Prostate gland (tissue), 2 donors: ENCODE measurements at regions of chr6 and their contacts with region 1.

Region 1: GRCh38 chr6:31597006-31597405 is 4.2 kb upstream of the NCR3 start:
- DNase-seq: no peak
- H3K4me3 ChIP-seq: no peak overlapping the region
- H3K27ac ChIP-seq: no peak overlapping the region
- H3K4me1 ChIP-seq: no peaks in the 10 kb centered on the region
- H3K27me3 ChIP-seq: no peaks in the 10 kb centered on the region
- CTCF ChIP-seq: peak in 2 of 4 experiments; percentile 11 to 36
- POLR2A ChIP-seq: no peak

Region 2: GRCh38 chr6:31546962-31547726 is 49.9 kb before region 1 on chr6 and contains the start of gene NFKBIL1:
- intact Hi-C with region 1: loop called (anchors 1 kb)
- DNase-seq: peak; percentile 96
- H3K4me3 ChIP-seq: peak within 1 kb of the TSS; percentile 35 to 43
- H3K27ac ChIP-seq: peak within 1 kb of the TSS; percentile 81 to 90
- H3K4me1 ChIP-seq: peaks cover 6% of the 10 kb centered on the region
- H3K27me3 ChIP-seq: no peaks in the 10 kb centered on the region
- CTCF ChIP-seq: no peak
- POLR2A ChIP-seq: peak; percentile 70
- total RNA-seq, gene NFKBIL1: 38.0 to 48.7 TPM

Region 3: GRCh38 chr6:31580807-31581433 is 16.1 kb before region 1 on chr6:
- intact Hi-C with region 1: loop called (anchors 1 kb)
- DNase-seq: peak; percentile 79
- H3K4me3 ChIP-seq: peak overlapping the region; percentile 62 to 68
- H3K27ac ChIP-seq: peak overlapping the region; percentile 65 to 85
- H3K4me1 ChIP-seq: no peaks in the 10 kb centered on the region
- H3K27me3 ChIP-seq: no peaks in the 10 kb centered on the region
- CTCF ChIP-seq: peak; percentile 92 to 98 (median 96)
- POLR2A ChIP-seq: peak; percentile 40

Region 4: GRCh38 chr6:31776989-31777666 is 180.1 kb after region 1 on chr6 and contains the start of gene VWA7:
- intact Hi-C with region 1: no loop called
- DNase-seq: peak; percentile 42
- H3K4me3 ChIP-seq: no peak within 1 kb of the TSS
- H3K27ac ChIP-seq: peak within 1 kb of the TSS in 1 of 2 donors; percentile 15
- H3K4me1 ChIP-seq: no peaks in the 10 kb centered on the region
- H3K27me3 ChIP-seq: no peaks in the 10 kb centered on the region
- CTCF ChIP-seq: peak in 1 of 4 experiments; percentile 10
- POLR2A ChIP-seq: peak; percentile 26
- total RNA-seq, gene VWA7: 2.7 to 13.0 TPM

Region 5: DNA sequence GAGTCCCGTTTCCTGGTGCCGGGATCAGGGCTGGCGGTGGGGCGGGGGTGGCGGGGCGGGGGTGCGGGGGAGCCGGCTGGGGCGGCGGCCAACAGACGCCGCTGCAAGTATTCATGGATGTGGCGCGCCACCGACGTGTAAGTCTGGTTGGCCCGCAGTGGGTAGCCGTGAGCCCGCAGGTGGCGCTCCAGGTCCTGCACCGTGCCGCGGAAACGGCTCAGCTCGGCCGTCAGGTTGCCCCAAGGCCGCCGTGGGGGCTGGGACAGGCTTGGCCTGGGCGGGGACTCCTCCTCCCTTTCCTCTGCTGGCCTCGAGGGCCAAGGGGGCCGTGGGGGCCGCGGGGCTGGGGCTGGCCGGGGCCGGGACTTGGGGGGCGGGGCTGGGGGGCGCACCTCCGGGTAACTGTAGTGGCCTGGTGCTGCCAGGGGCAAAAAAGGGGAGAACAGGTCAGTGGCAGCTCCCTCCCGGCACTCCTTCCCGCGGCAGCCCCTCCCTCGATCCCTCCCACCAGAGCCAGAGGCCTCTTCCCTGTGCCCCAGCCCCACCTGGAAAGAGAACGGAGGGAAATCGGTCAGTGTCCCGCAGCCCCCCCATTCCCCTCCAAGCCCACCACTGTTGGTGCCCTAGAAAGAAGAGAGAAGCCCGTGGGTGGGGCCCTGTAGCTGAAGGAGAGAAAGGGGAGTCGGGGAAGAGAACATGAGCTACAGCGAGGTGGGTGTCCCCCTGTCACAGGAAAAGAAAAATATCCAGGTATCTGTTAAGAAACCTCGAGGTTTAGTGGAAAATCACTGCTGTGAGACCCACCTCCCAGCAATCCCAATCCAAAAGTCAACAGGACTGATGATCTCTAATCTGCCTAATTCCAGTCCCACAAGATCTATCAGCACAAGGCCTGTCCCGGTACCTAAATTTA is 490.8 kb after region 1 on chr6:
- intact Hi-C with region 1: no loop called
- DNase-seq: peak; percentile 73
- H3K4me3 ChIP-seq: peak overlapping the region in 1 of 2 donors; percentile 7
- H3K27ac ChIP-seq: peak overlapping the region; percentile 59 to 63
- H3K4me1 ChIP-seq: no peaks in the 10 kb centered on the region
- H3K27me3 ChIP-seq: no peaks in the 10 kb centered on the region
- CTCF ChIP-seq: peak; percentile 36 to 78 (median 59)
- POLR2A ChIP-seq: no peak